BJ (cell line): ENCODE measurements at regions of chr2 and their contacts with region 1.

Region 1: DNA sequence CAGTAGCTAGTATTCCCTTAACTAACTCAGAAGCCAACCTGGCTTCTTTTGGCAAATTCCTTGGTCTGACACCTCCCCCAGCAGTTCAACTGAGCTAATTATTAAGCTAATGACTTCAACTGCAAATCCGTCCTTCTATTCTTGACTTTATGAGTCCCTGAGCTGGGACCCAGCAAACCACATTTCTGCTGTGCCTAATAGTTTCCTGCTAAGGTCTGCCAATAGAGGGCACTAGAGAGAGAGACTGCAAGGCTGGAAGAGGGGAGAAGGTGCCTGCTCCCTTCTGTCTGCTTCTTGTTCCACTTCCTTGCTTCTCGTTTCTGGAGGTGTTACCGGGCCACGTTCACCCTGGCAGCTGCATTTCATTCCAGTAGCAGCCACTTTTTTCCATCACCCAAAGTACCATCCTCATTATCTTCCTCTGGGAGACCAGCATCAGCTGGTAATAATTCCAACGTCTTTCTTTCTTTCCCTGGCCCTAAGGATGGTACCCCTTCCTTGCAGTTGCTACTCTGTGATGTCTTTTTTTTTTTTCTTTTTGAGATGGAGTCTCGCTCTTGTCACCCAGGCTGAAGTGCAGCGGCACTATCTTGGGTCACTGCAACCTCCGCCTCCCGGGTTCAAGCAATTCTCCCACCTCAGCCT is 352.0 kb downstream of the TNS1 start:
- DNase-seq: no peak
- H3K4me3 ChIP-seq: no peak overlapping the region
- H3K27me3 ChIP-seq: no peaks in the 10 kb centered on the region
- CTCF ChIP-seq: peak; percentile 83

Region 2: GRCh38 chr2:217585362-217585761 is 65.5 kb before region 1 on chr2:
- CTCF ChIA-PET with region 1: no interaction called
- POLR2A ChIA-PET with region 1: no interaction called
- DNase-seq: no peak
- H3K4me3 ChIP-seq: no peak overlapping the region
- H3K27me3 ChIP-seq: peaks cover 16% of the 10 kb centered on the region
- CTCF ChIP-seq: no peak

Region 3: DNA sequence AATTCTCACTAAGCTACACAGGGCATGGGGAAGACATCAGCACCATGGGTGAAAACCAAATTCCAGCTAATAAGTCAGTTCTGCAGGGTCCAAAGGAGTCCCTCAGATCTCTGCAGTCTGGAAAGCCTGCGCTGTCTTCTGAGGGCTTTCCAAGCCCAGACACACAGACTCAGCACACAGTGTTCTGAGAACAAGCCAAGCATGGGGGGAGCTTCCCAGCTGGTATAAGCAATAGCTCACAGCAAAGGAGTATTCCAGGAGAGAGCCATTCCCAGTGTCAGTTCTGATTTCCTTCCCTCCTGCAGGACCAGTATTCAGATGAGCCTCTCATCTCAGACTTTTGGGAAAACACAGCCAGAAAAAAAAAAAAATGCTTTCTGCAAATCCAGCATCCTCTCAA is 18.8 kb before region 1 on chr2:
- CTCF ChIA-PET with region 1: interaction called, 24 read pairs
- POLR2A ChIA-PET with region 1: no interaction called
- DNase-seq: no peak
- H3K4me3 ChIP-seq: no peak overlapping the region
- H3K27me3 ChIP-seq: peaks cover 2% of the 10 kb centered on the region
- CTCF ChIP-seq: no peak

Region 4: DNA sequence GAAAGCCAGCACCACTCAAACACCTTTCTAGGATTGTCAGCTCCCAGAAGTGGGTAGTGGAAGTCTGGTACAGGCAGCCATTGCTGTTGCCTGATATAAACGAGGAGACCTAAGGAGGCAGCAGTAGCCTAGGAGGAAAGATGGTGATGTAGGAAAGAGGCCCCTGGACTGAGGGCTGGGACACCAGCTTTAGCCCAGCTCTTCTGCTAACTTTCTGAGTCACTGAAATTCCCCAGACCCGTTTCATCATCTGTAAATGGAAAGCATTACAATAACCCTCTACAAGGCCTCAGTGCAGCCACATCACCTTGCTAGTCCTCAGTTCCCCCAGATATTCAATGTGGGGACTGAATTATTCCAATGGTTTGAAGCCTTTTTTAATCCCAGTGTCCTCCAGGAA is 15.5 kb after region 1 on chr2:
- CTCF ChIA-PET with region 1: interaction called, 14 read pairs
- POLR2A ChIA-PET with region 1: interaction called, 5 read pairs
- DNase-seq: no peak
- H3K4me3 ChIP-seq: no peak overlapping the region
- H3K27me3 ChIP-seq: no peaks in the 10 kb centered on the region
- CTCF ChIP-seq: no peak

Region 5: GRCh38 chr2:217713395-217714286 is 62.8 kb after region 1 on chr2:
- CTCF ChIA-PET with region 1: interaction called, 123 read pairs
- POLR2A ChIA-PET with region 1: interaction called, 4 read pairs
- DNase-seq: no peak
- H3K4me3 ChIP-seq: no peak overlapping the region
- H3K27me3 ChIP-seq: no peaks in the 10 kb centered on the region
- CTCF ChIP-seq: peak; percentile 98